ENCODE measurements at regions of chr2 and their contacts with region 1.

Region 1: DNA sequence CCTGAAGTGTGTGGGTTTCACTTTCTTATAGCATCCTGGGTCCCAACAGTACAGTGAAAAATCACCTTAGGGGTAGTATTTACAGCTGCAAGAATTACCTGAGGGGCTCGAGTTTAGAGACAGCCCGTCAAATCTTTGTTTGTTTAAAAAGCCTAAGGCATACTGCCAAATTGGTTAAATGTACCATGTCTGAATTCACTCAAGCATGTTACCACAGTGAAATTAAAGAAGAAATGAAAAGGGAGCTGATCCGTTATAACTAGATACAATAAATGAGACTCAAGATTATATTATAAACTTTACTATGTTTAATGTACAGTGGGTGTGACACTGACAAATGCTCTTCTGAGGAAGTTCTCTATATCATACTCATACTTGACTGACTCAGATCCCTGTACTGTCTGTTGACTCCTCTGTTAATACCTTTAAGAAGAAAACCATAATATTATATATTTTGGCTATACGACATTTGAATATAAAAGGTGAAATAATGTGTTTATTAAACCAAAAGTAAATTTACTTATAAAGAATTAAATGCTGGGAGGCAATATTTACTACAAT is 107.3 kb downstream of the TMEFF2 start:
- DNase-seq: no peak
- H3K4me3 ChIP-seq: no peak overlapping the region
- H3K27ac ChIP-seq: no peak overlapping the region
- H3K27me3 ChIP-seq: no peaks in the 10 kb centered on the region
- CTCF ChIP-seq: no peak

Region 2: GRCh38 chr2:192124571-192124970 is 37.1 kb after region 1 on chr2:
- CTCF ChIA-PET with region 1: interaction called, 14 read pairs
- POLR2A ChIA-PET with region 1: no interaction called
- DNase-seq: no peak
- H3K4me3 ChIP-seq: no peak overlapping the region
- H3K27ac ChIP-seq: no peak overlapping the region
- H3K27me3 ChIP-seq: no peaks in the 10 kb centered on the region
- CTCF ChIP-seq: no peak

Measured in AG04450 (cell line).